GM13977 (cell line): ENCODE measurements at regions of chr19 and their contacts with region 1.

Region 1: GRCh38 chr19:29873024-29873800 is 61.4 kb downstream of the CCNE1 start:
- DNase-seq: peak; percentile 89
- CTCF ChIP-seq: peak; percentile 95

Region 2: GRCh38 chr19:29753190-29753933 is 119.8 kb before region 1 on chr19:
- in situ Hi-C with region 1: loop called (anchors 10 kb)
- DNase-seq: no peak
- CTCF ChIP-seq: no peak

Region 3: DNA sequence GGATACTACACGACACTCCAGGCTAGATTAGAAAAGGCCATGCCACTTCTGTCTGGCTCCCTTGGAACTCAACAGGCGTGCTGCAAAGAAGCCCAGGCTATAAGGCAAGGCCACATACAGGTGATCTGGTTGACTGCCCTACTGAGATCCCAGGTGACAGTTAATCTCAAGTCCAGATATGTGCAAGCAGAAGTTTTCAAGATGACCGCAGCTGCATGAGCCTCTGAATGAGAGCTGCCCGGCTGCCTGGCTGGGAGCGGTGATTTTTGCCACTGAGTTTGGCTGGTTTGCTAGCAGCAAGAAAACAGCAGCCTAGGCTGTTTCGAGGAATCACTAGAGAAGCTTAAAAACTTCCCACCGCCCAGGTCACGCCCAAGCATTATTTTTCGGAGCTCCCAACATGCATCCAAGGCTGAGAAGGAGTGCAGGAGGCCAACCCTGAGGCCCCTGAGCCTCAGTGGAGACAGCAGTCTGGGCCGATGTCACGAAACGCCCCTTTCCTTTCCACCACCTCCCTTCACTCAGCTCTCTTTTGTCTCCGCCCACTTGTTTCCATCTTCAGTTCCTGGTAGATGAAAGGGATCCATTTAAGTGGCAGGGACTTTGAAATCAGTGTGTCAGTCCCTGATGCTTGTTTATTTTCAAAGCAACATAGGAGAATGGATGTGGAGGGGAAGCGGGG is 54.9 kb after region 1 on chr19:
- in situ Hi-C with region 1: no loop called
- DNase-seq: peak; percentile 52
- CTCF ChIP-seq: no peak

Region 4: DNA sequence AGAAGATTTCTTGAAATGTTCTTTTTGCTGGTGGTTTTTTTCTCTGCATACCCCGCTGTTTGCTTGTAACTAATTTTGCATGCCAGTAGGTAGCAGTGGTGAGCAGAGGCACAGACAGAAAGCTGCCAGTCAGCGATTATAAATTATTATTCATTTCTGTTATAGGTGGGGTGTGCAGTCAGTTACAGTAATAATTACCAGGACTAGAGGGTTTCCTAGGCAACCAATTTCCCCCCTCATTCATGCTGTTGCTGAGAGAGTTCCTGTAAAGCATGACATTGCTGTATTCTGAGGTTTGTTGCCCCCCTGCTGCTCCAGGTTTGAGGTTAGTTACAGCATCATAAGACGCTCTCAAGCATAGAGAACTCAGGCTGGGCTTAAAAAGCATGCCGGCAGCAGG is 173.3 kb after region 1 on chr19:
- in situ Hi-C with region 1: no loop called
- DNase-seq: peak; percentile 45
- CTCF ChIP-seq: peak; percentile 66